Natural killer cell (primary cell): ENCODE measurements at regions of chr5 and their contacts with region 1.

Region 1: GRCh38 chr5:180126726-180127681 is 55.4 kb upstream of the RNF130 start:
- DNase-seq: peak; percentile 50 to 52
- ATAC-seq: peak; percentile 53 to 88 (median 81)
- H3K4me3 ChIP-seq: no peak overlapping the region
- H3K4me3 Mint-ChIP-seq: no peak overlapping the region
- H3K27ac ChIP-seq: no peak overlapping the region
- H3K27ac Mint-ChIP-seq: no peak overlapping the region
- H3K4me1 ChIP-seq: peaks cover 2% of the 10 kb centered on the region
- H3K4me1 Mint-ChIP-seq: no peaks in the 10 kb centered on the region
- H3K27me3 ChIP-seq: no peaks in the 10 kb centered on the region
- H3K27me3 Mint-ChIP-seq: peaks cover 9 to 25% of the 10 kb centered on the region in 2 donors
- CTCF ChIP-seq: peak; percentile 92

Region 2: GRCh38 chr5:180209137-180209581 is 82.2 kb after region 1 on chr5 and contains the start of gene RASGEF1C:
- intact Hi-C with region 1: loop called (anchors 5 kb)
- DNase-seq: peak; percentile 71 to 82
- ATAC-seq: peak; percentile 88 to 99 (median 99)
- H3K4me3 ChIP-seq: no peak within 1 kb of the TSS
- H3K4me3 Mint-ChIP-seq: peak within 1 kb of the TSS; percentile 73
- H3K27ac ChIP-seq: no peak within 1 kb of the TSS
- H3K27ac Mint-ChIP-seq: no peak within 1 kb of the TSS
- H3K4me1 ChIP-seq: peaks cover 8% of the 10 kb centered on the region
- H3K4me1 Mint-ChIP-seq: peaks cover 8 to 13% of the 10 kb centered on the region in 2 donors
- H3K27me3 ChIP-seq: peaks cover 18% of the 10 kb centered on the region
- H3K27me3 Mint-ChIP-seq: peaks cover 27 to 38% of the 10 kb centered on the region in 2 donors
- CTCF ChIP-seq: peak; percentile 30
- total RNA-seq, gene RASGEF1C: not detected

Region 3: GRCh38 chr5:180315762-180316212 is 188.8 kb after region 1 on chr5:
- intact Hi-C with region 1: loop called (anchors 1 kb)
- DNase-seq: peak; percentile 74 to 85
- ATAC-seq: peak; percentile 64 to 85 (median 84)
- H3K4me3 ChIP-seq: no peak overlapping the region
- H3K4me3 Mint-ChIP-seq: no peak overlapping the region
- H3K27ac ChIP-seq: no peak overlapping the region
- H3K27ac Mint-ChIP-seq: no peak overlapping the region
- H3K4me1 ChIP-seq: no peaks in the 10 kb centered on the region
- H3K4me1 Mint-ChIP-seq: no peaks in the 10 kb centered on the region
- H3K27me3 ChIP-seq: no peaks in the 10 kb centered on the region
- H3K27me3 Mint-ChIP-seq: peaks cover 0 to 10% of the 10 kb centered on the region in 2 donors
- CTCF ChIP-seq: peak; percentile 96

Region 4: GRCh38 chr5:180328296-180329137 is 201.5 kb after region 1 on chr5:
- intact Hi-C with region 1: loop called (anchors 1 kb)
- DNase-seq: peak; percentile 77 to 93
- ATAC-seq: peak; percentile 69 to 97 (median 96)
- H3K4me3 ChIP-seq: no peak overlapping the region
- H3K4me3 Mint-ChIP-seq: no peak overlapping the region
- H3K27ac ChIP-seq: no peak overlapping the region
- H3K27ac Mint-ChIP-seq: no peak overlapping the region
- H3K4me1 ChIP-seq: peaks cover 4% of the 10 kb centered on the region
- H3K4me1 Mint-ChIP-seq: no peaks in the 10 kb centered on the region
- H3K27me3 ChIP-seq: no peaks in the 10 kb centered on the region
- H3K27me3 Mint-ChIP-seq: peaks cover 20 to 36% of the 10 kb centered on the region in 2 donors
- CTCF ChIP-seq: peak; percentile 84